ENCODE measurements at regions of chr5 and their contacts with region 1.

Region 1: DNA sequence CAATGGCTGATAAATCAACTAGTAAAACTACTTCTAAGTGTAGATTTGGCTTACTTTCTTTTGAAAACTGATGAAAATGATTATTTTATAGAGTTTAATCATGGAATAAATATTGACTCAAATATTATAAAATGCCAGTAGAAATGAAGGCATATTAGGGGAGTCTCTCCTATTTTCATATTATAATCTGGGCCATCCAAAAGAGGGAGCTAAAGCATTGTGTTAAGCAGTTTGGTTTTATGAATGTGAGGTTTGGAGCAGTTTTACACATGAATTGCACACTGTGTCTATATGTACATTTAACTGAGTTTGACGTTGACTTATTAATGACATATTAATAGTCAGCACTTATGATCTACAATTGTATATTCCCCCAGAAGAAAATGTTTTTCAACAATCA is 17.4 kb downstream of the CDH9 start:
- DNase-seq: peak; percentile 61
- ATAC-seq: peak; percentile 72
- H3K4me3 ChIP-seq: no peak overlapping the region
- H3K27ac ChIP-seq: no peak overlapping the region
- H3K4me1 ChIP-seq: peaks cover 4% of the 10 kb centered on the region
- H3K27me3 ChIP-seq: no peaks in the 10 kb centered on the region
- CTCF ChIP-seq: peak; percentile 73

Region 2: DNA sequence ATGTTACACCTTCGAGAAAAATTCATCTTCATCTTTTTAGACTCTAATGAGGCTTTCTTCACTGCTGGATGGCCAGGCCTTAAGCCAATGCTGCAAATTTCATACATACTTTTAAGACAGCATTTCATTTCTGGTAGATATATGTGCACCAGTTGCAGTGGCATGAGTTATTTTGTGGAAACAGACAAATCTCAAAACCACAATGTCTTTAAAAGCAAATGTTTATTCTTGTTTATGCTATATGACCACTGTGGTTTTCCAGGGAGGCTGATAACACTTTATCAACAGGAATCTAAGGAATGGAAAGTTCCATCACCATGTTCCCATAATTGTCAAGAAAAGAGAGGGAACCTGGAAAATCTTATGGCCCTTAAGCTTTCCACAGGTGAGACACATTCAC is 10.3 kb before region 1 on chr5:
- CTCF ChIA-PET with region 1: no interaction called
- POLR2A ChIA-PET with region 1: no interaction called
- intact Hi-C with region 1: no loop called
- DNase-seq: no peak
- ATAC-seq: no peak
- H3K4me3 ChIP-seq: no peak overlapping the region
- H3K27ac ChIP-seq: no peak overlapping the region
- H3K4me1 ChIP-seq: peaks cover 22% of the 10 kb centered on the region
- H3K27me3 ChIP-seq: no peaks in the 10 kb centered on the region
- CTCF ChIP-seq: no peak

Region 3: GRCh38 chr5:27103486-27103885 is 82.5 kb after region 1 on chr5:
- CTCF ChIA-PET with region 1: no interaction called
- POLR2A ChIA-PET with region 1: no interaction called
- intact Hi-C with region 1: no loop called
- DNase-seq: no peak
- ATAC-seq: no peak
- H3K4me3 ChIP-seq: no peak overlapping the region
- H3K27ac ChIP-seq: no peak overlapping the region
- H3K4me1 ChIP-seq: no peaks in the 10 kb centered on the region
- H3K27me3 ChIP-seq: no peaks in the 10 kb centered on the region
- CTCF ChIP-seq: no peak

Region 4: GRCh38 chr5:28313321-28313925 is 1292.5 kb after region 1 on chr5:
- CTCF ChIA-PET with region 1: no interaction called
- POLR2A ChIA-PET with region 1: no interaction called
- intact Hi-C with region 1: loop called (anchors 10 kb)
- DNase-seq: peak; percentile 84
- ATAC-seq: peak; percentile 96
- H3K4me3 ChIP-seq: no peak overlapping the region
- H3K27ac ChIP-seq: peak overlapping the region; percentile 64
- H3K4me1 ChIP-seq: peaks cover 25% of the 10 kb centered on the region
- H3K27me3 ChIP-seq: no peaks in the 10 kb centered on the region
- CTCF ChIP-seq: no peak

Region 5: DNA sequence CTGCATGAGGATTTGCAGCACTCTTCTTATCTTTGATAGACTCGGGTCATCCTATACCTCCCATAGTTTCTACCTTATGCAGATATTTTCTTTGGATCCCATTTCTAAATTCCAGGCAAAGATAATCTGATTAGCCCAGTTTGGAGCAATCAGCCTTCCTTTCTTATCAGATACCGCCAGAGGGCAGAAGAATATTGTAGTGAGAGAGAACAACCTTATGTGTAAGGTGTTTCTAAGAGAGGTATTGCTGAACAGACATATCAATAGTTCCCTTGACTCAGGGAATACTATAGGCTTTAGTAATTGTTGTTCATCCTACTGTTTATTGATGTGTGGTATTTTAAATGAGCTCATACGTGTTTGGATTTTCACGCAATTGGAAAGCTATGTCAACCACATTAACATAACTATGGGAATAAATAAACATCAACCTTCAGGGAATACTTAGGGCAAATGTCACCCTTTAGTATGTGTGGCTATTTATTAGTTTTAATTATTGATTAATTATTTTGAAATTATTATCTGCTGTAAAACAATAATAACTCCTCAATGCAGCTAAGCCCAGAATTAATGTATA is 1452.6 kb after region 1 on chr5:
- CTCF ChIA-PET with region 1: no interaction called
- POLR2A ChIA-PET with region 1: no interaction called
- intact Hi-C with region 1: loop called (anchors 10 kb)
- DNase-seq: peak; percentile 75
- ATAC-seq: peak; percentile 86
- H3K4me3 ChIP-seq: no peak overlapping the region
- H3K27ac ChIP-seq: no peak overlapping the region
- H3K4me1 ChIP-seq: no peaks in the 10 kb centered on the region
- H3K27me3 ChIP-seq: no peaks in the 10 kb centered on the region
- CTCF ChIP-seq: peak; percentile 80

Region 6: GRCh38 chr5:28766565-28767158 is 1745.7 kb after region 1 on chr5:
- CTCF ChIA-PET with region 1: no interaction called
- POLR2A ChIA-PET with region 1: no interaction called
- intact Hi-C with region 1: loop called (anchors 5 kb)
- DNase-seq: peak; percentile 73
- ATAC-seq: peak; percentile 33; the same call in 1 of the 2 replicates
- H3K4me3 ChIP-seq: no peak overlapping the region
- H3K27ac ChIP-seq: no peak overlapping the region
- H3K4me1 ChIP-seq: peaks cover 7% of the 10 kb centered on the region
- H3K27me3 ChIP-seq: no peaks in the 10 kb centered on the region
- CTCF ChIP-seq: peak; percentile 64

Measured in PC-3 (cell line).